ENCODE measurements at regions of chr4 and their contacts with region 1.

Region 1: GRCh38 chr4:154506253-154506652 is 14.7 kb upstream of the DCHS2 start:
- DNase-seq: no peak
- ATAC-seq: peak; percentile 50

Region 2: GRCh38 chr4:154084864-154085263 is 421.4 kb before region 1 on chr4:
- intact Hi-C with region 1: no loop called
- DNase-seq: no peak
- ATAC-seq: no peak

Region 3: GRCh38 chr4:154622416-154622997 is 116.3 kb after region 1 on chr4:
- intact Hi-C with region 1: loop called (anchors 5 kb)
- DNase-seq: no peak
- ATAC-seq: no peak